Heart left ventricle (tissue), 16 donors: ENCODE measurements at regions of chr17 and their contacts with region 1.

Region 1: GRCh38 chr17:45197555-45198334 is 23.9 kb upstream of the FMNL1 start:
- DNase-seq: peak; percentile 88 to 97 (median 93)
- ATAC-seq: peak; percentile 96 to 99 (median 96)
- H3K4me3 ChIP-seq: peak overlapping the region in 1 of 12 donors; percentile 21
- H3K27ac ChIP-seq: peak overlapping the region in 10 of 12 donors; percentile 32 to 74 (median 53)
- H3K4me1 ChIP-seq: peaks cover 0 to 18% (median 6%) of the 10 kb centered on the region in 12 donors
- H3K27me3 ChIP-seq: no peaks in the 10 kb centered on the region
- CTCF ChIP-seq: peak; percentile 97 to 100 (median 99)
- POLR2A ChIP-seq: no peak

Region 2: GRCh38 chr17:44919885-44920564 is 277.7 kb before region 1 on chr17:
- intact Hi-C with region 1: loop called in 4 of 10 experiments (anchors 10 kb)
- DNase-seq: peak; percentile 79 to 88 (median 84)
- ATAC-seq: peak; percentile 69 to 85 (median 84)
- H3K4me3 ChIP-seq: no peak overlapping the region
- H3K27ac ChIP-seq: peak overlapping the region in 5 of 12 donors; percentile 17 to 74 (median 70)
- H3K4me1 ChIP-seq: peaks cover 0 to 38% (median 16%) of the 10 kb centered on the region in 12 donors
- H3K27me3 ChIP-seq: peaks cover 0 to 4% (median 0%) of the 10 kb centered on the region in 9 donors
- CTCF ChIP-seq: peak; percentile 70 to 90 (median 84)
- POLR2A ChIP-seq: no peak

Region 3: GRCh38 chr17:45092932-45093430 is 104.8 kb before region 1 on chr17:
- intact Hi-C with region 1: loop called in 1 of 10 experiments (anchors 5 kb)
- DNase-seq: peak; percentile 79 to 91 (median 82)
- ATAC-seq: peak; percentile 94 to 97 (median 96)
- H3K4me3 ChIP-seq: no peak overlapping the region
- H3K27ac ChIP-seq: peak overlapping the region; percentile 70 to 97 (median 88)
- H3K4me1 ChIP-seq: peaks cover 12 to 41% (median 26%) of the 10 kb centered on the region in 12 donors
- H3K27me3 ChIP-seq: no peaks in the 10 kb centered on the region
- CTCF ChIP-seq: no peak
- POLR2A ChIP-seq: no peak

Region 4: DNA sequence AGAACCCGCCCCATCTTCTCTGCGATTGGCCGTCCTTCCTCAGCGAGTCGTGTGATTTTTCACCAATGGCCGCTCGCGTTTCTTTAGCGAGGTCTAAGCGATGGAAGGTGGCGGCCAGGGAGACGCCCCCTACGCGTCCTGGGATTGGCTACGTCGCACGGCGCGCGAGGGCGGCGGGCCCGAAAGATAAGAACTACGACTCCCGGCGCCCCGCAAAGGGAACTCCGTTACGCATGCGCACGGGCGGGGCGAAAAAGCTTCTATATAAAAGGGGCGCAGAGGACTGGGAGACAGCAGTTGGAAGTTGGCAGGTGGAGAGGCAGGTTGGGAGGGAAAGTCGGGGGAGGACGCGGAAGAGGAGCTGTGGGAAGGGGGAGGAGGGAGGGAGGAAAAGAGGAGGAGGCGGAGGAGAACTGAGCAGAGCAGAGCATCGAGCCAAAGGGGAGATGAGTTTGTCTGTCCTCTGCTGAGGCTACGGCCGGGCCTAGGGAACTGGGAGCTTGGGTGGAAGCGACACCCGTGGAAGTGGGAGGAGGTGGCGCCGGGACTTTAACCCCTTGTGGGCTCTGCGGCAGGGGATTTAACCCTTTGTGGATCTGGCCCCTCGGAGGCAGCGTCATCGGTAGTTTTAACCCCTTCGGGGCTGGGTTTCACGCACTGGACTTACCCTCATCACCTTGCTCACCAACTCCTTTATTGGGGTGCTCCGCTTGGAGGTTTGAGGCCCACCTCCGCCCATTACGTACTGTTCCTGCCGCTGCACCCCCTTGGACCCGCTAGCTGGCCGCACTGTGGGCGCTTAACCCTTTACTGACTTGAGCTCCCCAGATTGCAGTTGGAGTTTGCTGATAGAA is 49.3 kb before region 1 on chr17 and contains the start of gene HEXIM1:
- intact Hi-C with region 1: loop called in 1 of 10 experiments (anchors 5 kb)
- DNase-seq: peak; percentile 99 to 100 (median 99)
- ATAC-seq: peak; percentile 80 to 88 (median 84)
- H3K4me3 ChIP-seq: peak within 1 kb of the TSS; percentile 63 to 93 (median 79)
- H3K27ac ChIP-seq: peak within 1 kb of the TSS; percentile 95 to 100 (median 99)
- H3K4me1 ChIP-seq: peaks cover 5 to 67% (median 36%) of the 10 kb centered on the region in 12 donors
- H3K27me3 ChIP-seq: no peaks in the 10 kb centered on the region
- CTCF ChIP-seq: no peak
- POLR2A ChIP-seq: peak; percentile 79 to 99
- total RNA-seq, gene HEXIM1: 14.4 to 28.7 (median 22.5) TPM

Region 5: GRCh38 chr17:45161019-45161825 is 36.5 kb before region 1 on chr17:
- intact Hi-C with region 1: loop called in 2 of 10 experiments (anchors 2 to 5 kb)
- DNase-seq: peak; percentile 97 to 99 (median 98)
- ATAC-seq: peak; percentile 96 to 98 (median 97)
- H3K4me3 ChIP-seq: peak overlapping the region; percentile 65 to 98 (median 93)
- H3K27ac ChIP-seq: peak overlapping the region; percentile 96 to 100 (median 100)
- H3K4me1 ChIP-seq: peaks cover 6 to 50% (median 36%) of the 10 kb centered on the region in 12 donors
- H3K27me3 ChIP-seq: no peaks in the 10 kb centered on the region
- CTCF ChIP-seq: peak in 3 of 12 donors; percentile 8 to 21 (median 17)
- POLR2A ChIP-seq: peak in 1 of 2 donors; percentile 81

Region 6: GRCh38 chr17:45235416-45236281 is 37.9 kb after region 1 on chr17:
- intact Hi-C with region 1: no loop called
- DNase-seq: peak in 4 of 5 donors; percentile 72 to 85 (median 78)
- ATAC-seq: peak; percentile 29 to 64 (median 47)
- H3K4me3 ChIP-seq: no peak overlapping the region
- H3K27ac ChIP-seq: peak overlapping the region in 1 of 12 donors; percentile 18
- H3K4me1 ChIP-seq: peaks cover 0 to 32% (median 6%) of the 10 kb centered on the region in 12 donors
- H3K27me3 ChIP-seq: no peaks in the 10 kb centered on the region
- CTCF ChIP-seq: peak; percentile 69 to 83 (median 77)
- POLR2A ChIP-seq: no peak